ENCODE measurements at regions of chr10 and their contacts with region 1.

Region 1: DNA sequence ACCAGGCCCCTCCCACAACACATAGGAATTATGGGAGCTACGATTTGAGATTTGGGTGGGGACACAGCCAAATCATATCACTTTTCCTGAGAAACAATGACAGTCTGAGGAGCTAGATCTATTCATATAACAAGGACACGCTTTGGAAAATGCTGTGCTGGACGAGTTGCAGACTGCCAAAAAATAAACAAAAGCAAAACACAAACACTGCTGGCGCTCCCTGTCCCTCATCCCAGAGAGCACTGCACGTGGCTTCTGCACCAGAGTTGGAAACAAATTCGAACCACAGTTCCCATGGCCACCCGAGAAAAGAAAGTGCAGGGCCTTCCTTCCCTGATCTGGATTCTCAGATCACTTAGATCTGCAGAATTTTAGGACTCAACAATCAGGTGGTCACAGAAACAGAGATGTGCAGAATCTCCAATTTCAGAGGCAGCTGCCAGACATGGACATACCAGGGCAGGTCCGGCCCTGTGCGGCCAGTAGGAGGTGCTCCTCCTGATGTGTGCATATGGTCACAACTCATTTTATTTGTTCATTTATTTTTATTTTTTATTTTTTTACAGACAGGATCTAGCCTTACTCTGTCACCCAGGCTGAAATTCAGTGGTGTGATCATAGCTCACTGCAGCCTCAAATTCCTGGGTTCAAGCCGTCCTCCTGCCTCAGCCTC is 35.2 kb upstream of the ECHDC3 start:
- DNase-seq: no peak
- H3K4me3 ChIP-seq: no peak overlapping the region
- H3K27ac ChIP-seq: no peak overlapping the region
- H3K4me1 ChIP-seq: no peaks in the 10 kb centered on the region
- H3K27me3 ChIP-seq: no peaks in the 10 kb centered on the region
- CTCF ChIP-seq: no peak
- POLR2A ChIP-seq: no peak

Region 2: GRCh38 chr10:11673346-11674280 is 33.4 kb before region 1 on chr10:
- intact Hi-C with region 1: loop called (anchors 5 kb)
- DNase-seq: no peak
- H3K4me3 ChIP-seq: no peak overlapping the region
- H3K27ac ChIP-seq: no peak overlapping the region
- H3K4me1 ChIP-seq: peaks cover 9% of the 10 kb centered on the region
- H3K27me3 ChIP-seq: no peaks in the 10 kb centered on the region
- CTCF ChIP-seq: no peak
- POLR2A ChIP-seq: no peak

Measured in vagina (tissue), 2 donors.